A673 (cell line): ENCODE measurements at regions of chr1 and their contacts with region 1.

Region 1: DNA sequence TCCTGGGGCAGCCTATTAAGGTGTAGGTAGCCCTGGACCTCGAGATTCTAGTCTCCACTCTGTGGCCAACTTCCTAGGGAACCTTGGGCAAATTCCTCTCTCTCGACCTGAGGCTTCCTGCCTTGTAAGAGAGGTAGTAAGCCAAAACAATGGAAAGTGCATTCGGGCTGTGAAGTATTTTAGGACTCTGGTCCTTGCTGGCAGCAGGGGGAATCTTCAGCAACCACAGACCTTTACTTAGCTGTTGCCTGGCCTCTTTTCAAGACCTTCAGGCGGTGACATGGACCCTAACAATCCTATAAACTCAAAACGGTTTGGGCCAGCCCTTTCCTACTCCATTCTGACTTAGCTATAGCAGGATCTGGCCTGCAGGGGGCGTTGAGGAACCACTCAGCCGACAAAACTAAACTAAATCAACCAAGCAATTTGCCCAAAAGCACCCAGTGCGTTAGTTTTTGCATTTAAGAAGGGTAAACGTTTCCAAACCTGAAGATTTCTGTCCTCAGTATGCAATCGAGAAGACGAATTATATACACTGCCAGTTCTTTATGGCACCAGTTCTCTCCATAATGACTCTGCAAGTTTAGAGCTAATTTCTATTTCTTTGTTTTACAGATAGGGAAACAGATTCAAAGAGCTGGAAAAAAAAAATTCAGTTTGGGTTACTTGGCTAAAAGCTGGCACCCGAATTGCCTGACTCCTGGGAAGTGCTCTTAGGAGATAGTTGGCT is 10.9 kb upstream of the SESN2 start:
- DNase-seq: peak; percentile 89
- H3K4me3 ChIP-seq: peak overlapping the region; percentile 36
- H3K27ac ChIP-seq: peak overlapping the region; percentile 85
- H3K4me1 ChIP-seq: peaks cover 39% of the 10 kb centered on the region
- H3K27me3 ChIP-seq: no peaks in the 10 kb centered on the region
- CTCF ChIP-seq: peak; percentile 96

Region 2: GRCh38 chr1:28259307-28260167 is 11.1 kb after region 1 on chr1 and contains the start of gene SESN2:
- CTCF ChIA-PET with region 1: interaction called, 5 read pairs
- POLR2A ChIA-PET with region 1: interaction called, 10 read pairs
- intact Hi-C with region 1: no loop called
- DNase-seq: peak; percentile 99
- H3K4me3 ChIP-seq: peak within 1 kb of the TSS; percentile 100
- H3K27ac ChIP-seq: peak within 1 kb of the TSS; percentile 92
- H3K4me1 ChIP-seq: peaks cover 11% of the 10 kb centered on the region
- H3K27me3 ChIP-seq: no peaks in the 10 kb centered on the region
- CTCF ChIP-seq: no peak
- total RNA-seq, gene SESN2: 15.7 and 19.8 TPM in 2 replicates

Region 3: GRCh38 chr1:28329395-28330153 is 81.1 kb after region 1 on chr1:
- CTCF ChIA-PET with region 1: interaction called, 6 read pairs
- POLR2A ChIA-PET with region 1: interaction called, 10 read pairs
- intact Hi-C with region 1: loop called (anchors 2 kb)
- DNase-seq: peak; percentile 43
- H3K4me3 ChIP-seq: peak overlapping the region; percentile 67
- H3K27ac ChIP-seq: peak overlapping the region; percentile 88
- H3K4me1 ChIP-seq: peaks cover 5% of the 10 kb centered on the region
- H3K27me3 ChIP-seq: no peaks in the 10 kb centered on the region
- CTCF ChIP-seq: 0 out of 2 replicates have a peak, but pooled peaks have one; percentile 10

Region 4: DNA sequence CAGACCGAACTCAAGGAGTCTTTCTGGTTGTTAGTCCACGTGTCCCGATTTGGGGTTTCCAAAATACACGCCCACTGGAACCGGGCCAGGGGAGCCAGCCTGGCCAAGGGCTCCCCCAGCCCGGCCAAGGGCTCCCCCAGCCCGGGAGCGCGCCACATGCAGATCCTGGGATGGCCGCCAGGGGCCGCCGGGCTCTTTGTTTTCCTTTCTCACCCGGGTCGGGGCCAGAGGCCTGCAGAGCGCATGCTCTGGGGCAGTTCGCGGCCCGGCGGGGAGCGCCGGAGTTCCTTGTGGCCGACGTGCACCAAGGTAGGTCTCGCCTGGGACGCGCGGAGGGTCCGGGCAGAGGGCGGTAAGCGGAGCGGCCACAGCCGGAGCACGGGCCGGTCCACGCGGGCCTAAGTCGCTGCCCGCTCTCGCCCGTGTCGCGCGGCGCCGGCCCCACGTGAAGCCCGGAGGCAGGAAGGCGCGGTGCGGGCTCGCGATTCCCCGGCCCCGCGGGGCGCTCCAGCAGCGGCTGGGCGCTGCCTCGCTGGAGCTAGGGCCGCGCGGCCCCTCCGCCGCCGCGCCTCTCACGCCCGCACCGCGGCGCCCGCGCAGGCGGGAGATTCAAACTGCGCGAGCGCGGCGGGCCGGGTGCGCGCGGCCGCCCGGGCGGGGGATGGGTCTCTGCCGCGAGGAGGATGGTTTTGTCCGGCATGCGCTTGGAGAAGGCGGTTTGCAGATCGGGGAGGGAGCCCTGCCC is 269.7 kb after region 1 on chr1:
- CTCF ChIA-PET with region 1: no interaction called
- POLR2A ChIA-PET with region 1: interaction called, 11 read pairs
- intact Hi-C with region 1: loop called (anchors 10 kb)
- DNase-seq: peak; percentile 95
- H3K4me3 ChIP-seq: peak overlapping the region; percentile 66
- H3K27ac ChIP-seq: peak overlapping the region; percentile 96
- H3K4me1 ChIP-seq: peaks cover 14% of the 10 kb centered on the region
- H3K27me3 ChIP-seq: no peaks in the 10 kb centered on the region
- CTCF ChIP-seq: peak; percentile 95

Region 5: DNA sequence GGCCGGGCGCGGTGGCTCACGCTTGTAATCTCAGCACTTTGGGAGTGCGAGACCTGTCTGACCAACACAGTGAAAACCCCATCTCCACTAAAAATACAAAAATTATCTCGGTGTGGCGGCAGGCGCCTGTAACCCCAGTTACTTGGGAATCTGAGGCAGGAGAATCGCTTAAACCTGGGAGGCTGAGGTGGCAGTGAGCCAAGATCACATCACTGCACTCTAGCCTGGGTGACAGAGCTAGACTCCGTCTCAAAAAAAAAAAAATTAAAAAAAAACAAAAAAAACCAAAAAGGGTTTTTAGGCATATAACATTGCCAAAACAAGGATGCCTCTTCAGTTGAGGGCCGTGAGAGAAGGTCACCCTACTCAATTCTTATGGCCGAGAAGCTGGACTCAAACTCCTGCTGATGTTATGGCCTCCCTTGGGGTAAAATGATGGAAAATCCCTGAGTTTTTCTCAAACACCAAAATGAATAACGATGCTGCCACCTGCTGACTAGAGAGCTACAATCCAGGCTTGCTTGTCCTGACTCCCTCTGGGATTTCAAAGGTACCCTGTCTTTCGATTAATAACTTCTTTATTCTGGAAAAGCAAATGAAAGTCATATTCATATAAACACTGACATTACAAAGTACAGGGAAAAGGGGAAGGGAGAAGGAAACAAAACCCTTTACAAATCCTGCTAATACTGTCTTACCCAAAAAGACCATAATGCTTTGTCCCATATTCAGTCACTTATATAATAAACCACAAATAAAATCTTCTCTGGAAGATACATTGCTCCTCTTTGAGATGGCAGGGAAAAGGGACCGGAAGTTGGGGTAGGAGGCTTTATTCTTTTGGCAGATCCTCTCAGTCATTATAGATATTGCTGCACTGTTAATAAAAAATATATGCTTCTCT is 354.3 kb after region 1 on chr1:
- CTCF ChIA-PET with region 1: interaction called, 8 read pairs
- POLR2A ChIA-PET with region 1: no interaction called
- intact Hi-C with region 1: loop called (anchors 2 kb)
- DNase-seq: peak; percentile 89
- H3K4me3 ChIP-seq: no peak overlapping the region
- H3K27ac ChIP-seq: no peak overlapping the region
- H3K4me1 ChIP-seq: peaks cover 6% of the 10 kb centered on the region
- H3K27me3 ChIP-seq: no peaks in the 10 kb centered on the region
- CTCF ChIP-seq: peak; percentile 87

Region 6: DNA sequence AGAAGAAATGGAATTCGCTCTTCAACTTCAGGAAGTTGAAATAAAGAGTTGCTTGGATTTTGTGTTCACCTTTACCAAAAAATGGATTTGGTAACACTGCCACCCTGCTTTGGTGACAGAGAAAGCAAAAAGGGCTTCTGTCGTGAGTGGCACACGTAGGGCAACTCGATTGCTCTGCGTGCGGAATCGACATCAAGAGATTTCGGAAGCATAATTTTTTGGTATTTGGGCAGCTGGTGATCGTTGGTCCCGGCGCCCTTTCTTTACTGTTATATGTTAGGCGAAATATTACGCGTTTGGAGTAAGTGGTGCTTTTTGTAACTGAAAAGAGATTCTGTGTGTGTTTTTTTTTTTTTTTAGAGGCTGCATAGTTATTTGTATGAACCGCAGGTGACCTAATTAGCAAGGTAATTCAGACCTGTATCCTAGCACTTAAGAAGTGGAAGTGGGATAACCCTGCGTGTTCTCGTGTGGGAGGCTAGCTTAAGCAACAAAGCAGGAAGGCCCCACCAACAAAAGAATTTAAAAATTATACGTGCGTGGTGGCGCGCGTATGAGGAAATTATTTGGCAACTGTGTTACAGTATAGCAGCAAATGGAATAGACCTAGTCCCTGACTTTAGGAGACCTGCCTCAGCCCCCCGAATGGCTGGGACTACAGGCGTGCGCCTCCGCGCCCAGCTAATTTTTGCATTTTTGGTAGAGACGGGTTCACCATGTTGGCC is 400.2 kb after region 1 on chr1 and contains the start of gene RNU11:
- CTCF ChIA-PET with region 1: no interaction called
- POLR2A ChIA-PET with region 1: interaction called, 16 read pairs
- intact Hi-C with region 1: no loop called
- DNase-seq: peak; percentile 98
- H3K4me3 ChIP-seq: peak within 1 kb of the TSS; percentile 40
- H3K27ac ChIP-seq: peak within 1 kb of the TSS; percentile 100
- H3K4me1 ChIP-seq: peaks cover 9% of the 10 kb centered on the region
- H3K27me3 ChIP-seq: no peaks in the 10 kb centered on the region
- CTCF ChIP-seq: no peak; the same call in 1 of the 2 replicates
- total RNA-seq, gene RNU11: not detected in 2 replicates

Region 7: GRCh38 chr1:28877132-28877781 is 628.8 kb after region 1 on chr1:
- CTCF ChIA-PET with region 1: interaction called, 10 read pairs
- POLR2A ChIA-PET with region 1: no interaction called
- intact Hi-C with region 1: no loop called
- DNase-seq: peak; percentile 85
- H3K4me3 ChIP-seq: no peak overlapping the region
- H3K27ac ChIP-seq: no peak overlapping the region
- H3K4me1 ChIP-seq: peaks cover 3% of the 10 kb centered on the region
- H3K27me3 ChIP-seq: no peaks in the 10 kb centered on the region
- CTCF ChIP-seq: peak; percentile 94